B cell (primary cell): ENCODE measurements at regions of chr6 and their contacts with region 1.

Region 1: GRCh38 chr6:15245361-15246216 is at the start of gene JARID2:
- DNase-seq: peak; percentile 98
- ATAC-seq: peak; percentile 58
- H3K4me3 ChIP-seq: peak within 1 kb of the TSS; percentile 76 to 100 (median 96)
- H3K4me3 Mint-ChIP-seq: peak within 1 kb of the TSS; percentile 97
- H3K27ac ChIP-seq: peak within 1 kb of the TSS; percentile 83 to 86
- H3K27ac Mint-ChIP-seq: peak within 1 kb of the TSS; percentile 96
- H3K4me1 ChIP-seq: peaks cover 13 to 19% of the 10 kb centered on the region in 2 donors
- H3K4me1 Mint-ChIP-seq: peaks cover 26% of the 10 kb centered on the region
- H3K27me3 ChIP-seq: no peaks in the 10 kb centered on the region
- H3K27me3 Mint-ChIP-seq: no peaks in the 10 kb centered on the region
- CTCF ChIP-seq: no peak
- total RNA-seq, gene JARID2: 58.1 and 59.0 TPM in 2 replicates

Region 2: DNA sequence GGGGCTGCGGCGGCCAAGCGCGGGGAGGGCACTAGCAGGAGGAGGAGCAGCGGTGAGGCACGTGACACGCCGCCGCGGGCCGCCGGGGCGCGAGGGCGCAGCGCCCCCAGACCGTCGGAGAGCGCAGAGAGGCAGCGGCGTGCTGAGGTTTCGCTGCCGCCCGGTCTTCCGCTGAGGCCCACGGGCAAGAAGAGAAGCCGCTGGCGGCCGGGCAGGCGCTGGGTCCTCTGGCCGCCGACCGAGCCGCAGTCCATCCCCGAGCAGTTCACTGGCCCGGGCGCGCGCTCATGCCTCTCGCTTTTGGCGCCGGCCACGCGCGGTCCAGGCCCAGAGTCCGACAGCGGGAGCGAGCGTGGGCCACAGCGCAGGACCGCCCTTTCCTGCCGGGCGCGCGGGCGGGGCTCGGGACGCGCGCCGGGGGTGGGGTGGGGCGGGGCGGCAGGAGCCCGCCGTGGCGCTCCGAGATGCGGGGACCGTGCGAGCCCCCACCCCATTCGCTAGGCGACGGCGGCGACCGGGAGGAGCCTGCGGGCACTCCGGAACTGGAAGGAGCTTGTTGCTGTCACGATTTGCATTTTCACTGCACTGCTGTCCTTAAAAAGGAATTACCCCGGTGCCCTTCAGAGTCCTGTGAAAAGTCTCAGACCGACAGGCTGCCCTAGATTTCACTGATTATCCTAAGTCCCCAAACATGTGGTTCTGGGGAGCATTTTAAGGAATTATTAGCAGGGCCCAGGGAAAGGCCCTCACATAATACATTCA is 1431.2 kb before region 1 on chr6 and contains the start of gene MCUR1:
- CTCF ChIA-PET with region 1: no interaction called
- POLR2A ChIA-PET with region 1: no interaction called
- intact Hi-C with region 1: loop called (anchors 1 kb)
- DNase-seq: peak; percentile 94
- ATAC-seq: peak; percentile 82
- H3K4me3 ChIP-seq: peak within 1 kb of the TSS; percentile 63 to 88 (median 77)
- H3K4me3 Mint-ChIP-seq: peak within 1 kb of the TSS; percentile 94
- H3K27ac ChIP-seq: peak within 1 kb of the TSS; percentile 68 to 89
- H3K27ac Mint-ChIP-seq: peak within 1 kb of the TSS; percentile 89
- H3K4me1 ChIP-seq: peaks cover 17 to 20% of the 10 kb centered on the region in 2 donors
- H3K4me1 Mint-ChIP-seq: peaks cover 31% of the 10 kb centered on the region
- H3K27me3 ChIP-seq: no peaks in the 10 kb centered on the region
- H3K27me3 Mint-ChIP-seq: no peaks in the 10 kb centered on the region
- CTCF ChIP-seq: peak; percentile 14
- total RNA-seq, gene MCUR1: 10.6 and 11.2 TPM in 2 replicates

Region 3: GRCh38 chr6:14210663-14211561 is 1034.7 kb before region 1 on chr6:
- CTCF ChIA-PET with region 1: interaction called, 3 read pairs
- POLR2A ChIA-PET with region 1: interaction called, 3 read pairs
- intact Hi-C with region 1: loop called (anchors 1 kb)
- DNase-seq: peak; percentile 96
- ATAC-seq: peak; percentile 91
- H3K4me3 ChIP-seq: peak overlapping the region; percentile 3 to 92 (median 82)
- H3K4me3 Mint-ChIP-seq: peak overlapping the region; percentile 90
- H3K27ac ChIP-seq: peak overlapping the region; percentile 92 to 97
- H3K27ac Mint-ChIP-seq: peak overlapping the region; percentile 97
- H3K4me1 ChIP-seq: peaks cover 30 to 33% of the 10 kb centered on the region in 2 donors
- H3K4me1 Mint-ChIP-seq: peaks cover 44% of the 10 kb centered on the region
- H3K27me3 ChIP-seq: no peaks in the 10 kb centered on the region
- H3K27me3 Mint-ChIP-seq: no peaks in the 10 kb centered on the region
- CTCF ChIP-seq: peak; percentile 72

Region 4: GRCh38 chr6:14660806-14661579 is 584.6 kb before region 1 on chr6:
- CTCF ChIA-PET with region 1: no interaction called
- POLR2A ChIA-PET with region 1: no interaction called
- intact Hi-C with region 1: loop called (anchors 1 kb)
- DNase-seq: peak; percentile 92
- ATAC-seq: peak; percentile 67
- H3K4me3 ChIP-seq: peak overlapping the region in 3 of 5 experiments; percentile 12 to 41 (median 20)
- H3K4me3 Mint-ChIP-seq: no peak overlapping the region
- H3K27ac ChIP-seq: peak overlapping the region; percentile 98
- H3K27ac Mint-ChIP-seq: no peak overlapping the region
- H3K4me1 ChIP-seq: peaks cover 94 to 96% of the 10 kb centered on the region in 2 donors
- H3K4me1 Mint-ChIP-seq: peaks cover 28% of the 10 kb centered on the region
- H3K27me3 ChIP-seq: no peaks in the 10 kb centered on the region
- H3K27me3 Mint-ChIP-seq: no peaks in the 10 kb centered on the region
- CTCF ChIP-seq: no peak

Region 5: GRCh38 chr6:15148356-15148946 is 97.1 kb before region 1 on chr6:
- CTCF ChIA-PET with region 1: no interaction called
- POLR2A ChIA-PET with region 1: interaction called, 4 read pairs
- intact Hi-C with region 1: loop called (anchors 1 kb)
- DNase-seq: no peak
- ATAC-seq: peak; percentile 21
- H3K4me3 ChIP-seq: no peak overlapping the region
- H3K4me3 Mint-ChIP-seq: peak overlapping the region; percentile 12
- H3K27ac ChIP-seq: no peak overlapping the region
- H3K27ac Mint-ChIP-seq: peak overlapping the region; percentile 12
- H3K4me1 ChIP-seq: peaks cover 17 to 28% of the 10 kb centered on the region in 2 donors
- H3K4me1 Mint-ChIP-seq: peaks cover 26% of the 10 kb centered on the region
- H3K27me3 ChIP-seq: no peaks in the 10 kb centered on the region
- H3K27me3 Mint-ChIP-seq: no peaks in the 10 kb centered on the region
- CTCF ChIP-seq: no peak

Region 6: GRCh38 chr6:15441215-15441868 is 195.8 kb after region 1 on chr6:
- CTCF ChIA-PET with region 1: interaction called, 3 read pairs
- POLR2A ChIA-PET with region 1: interaction called, 3 read pairs
- intact Hi-C with region 1: loop called (anchors 5 kb)
- DNase-seq: peak; percentile 67
- ATAC-seq: peak; percentile 58
- H3K4me3 ChIP-seq: no peak overlapping the region
- H3K4me3 Mint-ChIP-seq: no peak overlapping the region
- H3K27ac ChIP-seq: no peak overlapping the region
- H3K27ac Mint-ChIP-seq: peak overlapping the region; percentile 38
- H3K4me1 ChIP-seq: peaks cover 31 to 54% of the 10 kb centered on the region in 2 donors
- H3K4me1 Mint-ChIP-seq: peaks cover 71% of the 10 kb centered on the region
- H3K27me3 ChIP-seq: no peaks in the 10 kb centered on the region
- H3K27me3 Mint-ChIP-seq: no peaks in the 10 kb centered on the region
- CTCF ChIP-seq: peak; percentile 82